ENCODE measurements at regions of chr1 and their contacts with region 1.

Region 1: DNA sequence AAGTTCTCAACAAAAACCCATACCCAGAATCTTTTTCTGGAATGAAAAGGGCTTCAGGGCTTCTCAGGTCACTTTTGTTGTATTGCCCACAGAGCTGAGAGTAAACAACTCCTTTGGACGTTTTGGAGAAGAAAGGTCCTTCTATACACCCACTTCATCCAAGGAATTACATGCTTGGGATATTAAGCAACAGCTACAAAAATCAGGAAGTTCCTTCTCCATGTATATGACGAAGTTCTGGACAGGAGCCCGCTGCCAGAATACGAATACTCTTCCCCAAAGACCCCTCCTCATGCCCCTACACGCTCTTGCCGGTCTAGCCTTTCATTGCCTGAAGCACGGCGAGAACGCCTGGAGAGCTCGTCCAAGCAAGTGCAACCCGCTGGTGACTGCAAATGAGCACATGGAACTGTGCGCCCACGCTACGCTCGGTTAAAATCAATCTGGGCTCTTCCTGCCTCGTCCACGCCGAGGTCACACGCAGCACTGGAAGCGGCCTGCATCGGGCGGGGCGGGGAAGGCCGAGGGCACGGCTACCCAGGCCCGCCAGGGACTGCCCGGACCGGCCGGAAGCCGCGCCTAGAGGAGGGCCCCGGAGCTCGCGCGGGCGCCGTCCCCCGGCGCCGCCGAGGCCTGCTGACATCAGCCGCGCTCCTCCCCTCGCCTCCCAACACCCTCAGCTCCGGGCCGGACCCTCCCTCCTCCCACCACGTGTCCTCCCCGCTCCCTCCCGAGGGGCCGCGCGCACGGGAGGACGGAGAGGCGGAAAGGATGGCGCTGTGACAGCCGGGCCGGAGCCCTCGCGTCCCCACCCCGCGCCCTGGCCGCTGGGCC is at the start of gene POGK:
- DNase-seq: peak; percentile 91
- H3K4me3 Mint-ChIP-seq: peak within 1 kb of the TSS; percentile 95
- H3K27ac Mint-ChIP-seq: peak within 1 kb of the TSS; percentile 96
- H3K4me1 Mint-ChIP-seq: peaks cover 46% of the 10 kb centered on the region
- H3K27me3 Mint-ChIP-seq: no peaks in the 10 kb centered on the region
- total RNA-seq, gene POGK: 33.1 to 34.9 TPM

Region 2: GRCh38 chr1:166875734-166876539 is 37.0 kb after region 1 on chr1 and contains the start of gene TADA1:
- CTCF ChIA-PET with region 1: no interaction called
- intact Hi-C with region 1: loop called (anchors 1 kb)
- DNase-seq: peak; percentile 100
- H3K4me3 Mint-ChIP-seq: peak within 1 kb of the TSS; percentile 99
- H3K27ac Mint-ChIP-seq: peak within 1 kb of the TSS; percentile 97
- H3K4me1 Mint-ChIP-seq: peaks cover 37% of the 10 kb centered on the region
- H3K27me3 Mint-ChIP-seq: no peaks in the 10 kb centered on the region
- total RNA-seq, gene TADA1: 19.6 to 19.9 TPM